H1 (cell line): ENCODE measurements at regions of chr14 and their contacts with region 1.

Region 1: GRCh38 chr14:24160850-24161804 is at the start of gene IRF9:
- DNase-seq: peak; percentile 94 to 100
- H3K4me3 ChIP-seq: peak within 1 kb of the TSS; percentile 6 to 52 (median 20); a peak in 5 of 8 replicates
- H3K27ac ChIP-seq: peak within 1 kb of the TSS; percentile 55; the same call in 1 of the 2 replicates
- H3K4me1 ChIP-seq: peaks cover 0 to 10% (median 2%) of the 10 kb centered on the region in 4 experiments; a peak in 3 of 7 replicates
- H3K27me3 ChIP-seq: no peaks in the 10 kb centered on the region
- CTCF ChIP-seq: peak; percentile 85 to 97 (median 95)
- EP300 ChIP-seq: 0 out of 3 replicates have a peak, but pooled peaks of 1 of the 2 experiments have one; percentile 68
- POLR2A ChIP-seq: peak in 1 of 2 experiments; percentile 48; a peak in 1 of 3 replicates
- RAD21 ChIP-seq: peak; percentile 73 to 78
- total RNA-seq, gene IRF9: 11.1 and 11.4 TPM in 2 replicates

Region 2: GRCh38 chr14:24100197-24100981 is 60.7 kb before region 1 on chr14:
- CTCF ChIA-PET with region 1: interaction called, 6 read pairs
- POLR2A ChIA-PET with region 1: interaction called, 21 read pairs
- DNase-seq: no peak
- H3K4me3 ChIP-seq: no peak overlapping the region
- H3K27ac ChIP-seq: no peak overlapping the region
- H3K4me1 ChIP-seq: peaks cover 0 to 4% (median 4%) of the 10 kb centered on the region in 4 experiments; a peak in 6 of 7 replicates
- H3K27me3 ChIP-seq: no peaks in the 10 kb centered on the region
- CTCF ChIP-seq: no peak
- EP300 ChIP-seq: no peak
- POLR2A ChIP-seq: no peak; a peak in 1 of 3 replicates
- RAD21 ChIP-seq: no peak

Region 3: DNA sequence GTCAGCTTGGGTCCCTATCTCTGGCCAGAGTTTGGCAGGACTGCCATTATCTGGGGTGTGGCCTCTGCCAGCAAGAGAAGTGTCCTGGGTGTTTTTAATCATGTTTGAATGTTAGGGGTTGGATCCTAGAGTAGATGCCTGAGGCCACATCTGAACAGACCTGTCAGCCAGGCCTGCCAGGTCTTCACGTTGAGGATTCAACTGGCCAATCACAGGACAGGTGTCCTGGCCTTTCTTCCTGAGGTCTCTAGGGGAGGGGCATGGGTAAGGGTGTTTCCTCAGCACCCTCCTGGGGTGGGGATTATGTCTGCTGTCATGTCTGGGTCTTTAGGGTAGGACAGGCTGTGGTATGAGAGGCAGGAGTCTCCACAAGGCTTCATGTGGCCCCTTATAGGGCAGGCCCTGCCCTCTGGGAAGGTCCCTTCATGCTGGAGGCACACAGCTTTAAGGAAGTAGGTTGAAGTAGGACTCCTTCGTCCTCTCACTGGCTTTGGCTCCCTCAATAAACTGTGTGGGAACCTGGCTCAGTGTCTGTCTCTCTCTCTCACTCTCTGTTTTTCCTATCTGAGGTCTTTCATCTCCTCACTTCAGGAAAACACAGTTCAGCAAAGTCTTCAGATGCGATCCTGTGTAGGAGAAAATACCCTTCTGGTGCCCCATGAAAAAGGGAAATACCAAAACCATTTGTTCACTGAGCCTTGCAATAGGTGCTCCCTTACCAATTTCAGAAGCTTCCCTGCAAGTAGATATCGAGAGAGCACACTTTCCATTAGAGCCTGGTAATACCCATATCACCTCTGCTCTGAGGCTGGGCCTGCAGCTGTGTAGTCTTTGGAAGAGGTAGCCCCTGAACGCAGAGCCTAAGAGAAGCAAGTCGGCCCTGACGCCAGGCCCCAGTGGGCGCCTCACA is 37.4 kb before region 1 on chr14:
- CTCF ChIA-PET with region 1: interaction called, 12 read pairs
- POLR2A ChIA-PET with region 1: interaction called, 3 read pairs
- DNase-seq: no peak
- H3K4me3 ChIP-seq: no peak overlapping the region
- H3K27ac ChIP-seq: no peak overlapping the region
- H3K4me1 ChIP-seq: no peaks in the 10 kb centered on the region
- H3K27me3 ChIP-seq: no peaks in the 10 kb centered on the region
- CTCF ChIP-seq: no peak
- EP300 ChIP-seq: no peak
- POLR2A ChIP-seq: no peak
- RAD21 ChIP-seq: no peak

Region 4: DNA sequence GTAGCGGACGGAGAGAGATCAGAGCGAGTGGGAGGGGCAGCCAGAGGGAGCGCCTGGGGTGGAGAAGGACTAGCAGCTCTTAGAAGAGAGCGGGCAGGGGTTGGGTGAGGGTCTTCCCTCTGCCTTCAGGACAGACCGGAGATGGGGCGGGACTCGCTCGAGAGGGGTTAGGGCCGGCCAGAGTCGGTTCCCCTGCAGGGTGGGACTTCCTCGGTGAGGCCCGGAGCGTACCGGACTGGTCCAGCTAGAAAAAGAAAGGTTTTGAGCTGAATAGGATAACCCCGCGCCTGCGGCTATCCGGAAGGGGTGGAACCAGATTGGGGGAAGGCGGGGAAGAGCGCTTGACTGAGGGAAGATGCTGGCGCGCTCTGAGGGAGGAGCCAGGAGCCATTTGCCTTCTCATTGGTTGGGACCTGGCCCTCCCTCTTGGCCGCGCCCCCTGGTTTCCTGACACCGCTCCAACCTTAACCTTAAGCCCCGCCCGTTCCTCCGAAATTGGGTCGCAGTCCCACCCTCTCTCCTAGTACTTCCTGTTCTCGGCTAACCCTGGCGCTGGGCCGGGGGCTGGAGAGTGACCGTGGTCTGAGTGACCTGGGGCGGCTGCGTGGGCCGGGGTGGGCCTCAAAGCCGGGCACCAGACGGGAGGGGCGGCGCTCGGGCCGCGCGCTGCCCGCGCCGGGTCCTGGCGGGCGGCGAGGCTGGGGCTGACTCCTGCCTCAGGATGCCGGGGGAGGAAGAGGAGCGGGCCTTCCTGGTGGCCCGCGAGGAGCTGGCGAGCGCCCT is 14.0 kb before region 1 on chr14 and contains the start of gene RNF31:
- CTCF ChIA-PET with region 1: interaction called, 26 read pairs
- POLR2A ChIA-PET with region 1: interaction called, 86 read pairs
- DNase-seq: peak; percentile 93 to 96
- H3K4me3 ChIP-seq: peak within 1 kb of the TSS; percentile 92 to 98 (median 96)
- H3K27ac ChIP-seq: peak within 1 kb of the TSS; percentile 45; the same call in 1 of the 2 replicates
- H3K4me1 ChIP-seq: peaks cover 0 to 10% (median 7%) of the 10 kb centered on the region in 4 experiments; a peak in 5 of 7 replicates
- H3K27me3 ChIP-seq: no peaks in the 10 kb centered on the region
- CTCF ChIP-seq: no peak
- EP300 ChIP-seq: no peak
- POLR2A ChIP-seq: peak in 1 of 2 experiments; percentile 55; a peak in 1 of 3 replicates
- RAD21 ChIP-seq: no peak
- total RNA-seq, gene RNF31: 57.8 and 72.0 TPM in 2 replicates

Region 5: GRCh38 chr14:24188251-24189058 is 27.3 kb after region 1 on chr14 and contains the start of gene IPO4:
- CTCF ChIA-PET with region 1: interaction called, 16 read pairs
- POLR2A ChIA-PET with region 1: interaction called, 93 read pairs
- DNase-seq: peak; percentile 93 to 95
- H3K4me3 ChIP-seq: peak within 1 kb of the TSS; percentile 75 to 91 (median 87)
- H3K27ac ChIP-seq: peak within 1 kb of the TSS; percentile 58; the same call in 1 of the 2 replicates
- H3K4me1 ChIP-seq: peaks cover 0 to 7% (median 4%) of the 10 kb centered on the region in 4 experiments; a peak in 6 of 7 replicates
- H3K27me3 ChIP-seq: no peaks in the 10 kb centered on the region
- CTCF ChIP-seq: no peak; a peak in 1 of 4 replicates
- EP300 ChIP-seq: peak in 1 of 2 experiments; percentile 93; a peak in 1 of 3 replicates
- POLR2A ChIP-seq: peak in 1 of 2 experiments; percentile 91; a peak in 2 of 3 replicates
- RAD21 ChIP-seq: peak; percentile 24 to 37; a peak in 2 of 4 replicates
- total RNA-seq, gene IPO4: 108 and 109 TPM in 2 replicates